Activated CD4-positive, alpha-beta memory T cell treated with anti-CD3 and anti-CD28 coated beads, Interleukin-2, amount 10 ng/mL, durations not matched to agents 7 days and 5 days (primary cell): ENCODE measurements at regions of chr2 and their contacts with region 1.

Region 1: GRCh38 chr2:31170071-31170698 is 31.9 kb upstream of the GALNT14 start:
- DNase-seq: peak; percentile 62
- H3K4me3 Mint-ChIP-seq: no peak overlapping the region
- H3K27ac Mint-ChIP-seq: no peak overlapping the region
- H3K4me1 Mint-ChIP-seq: peaks cover under 1% of the 10 kb centered on the region
- H3K27me3 Mint-ChIP-seq: no peaks in the 10 kb centered on the region

Region 2: DNA sequence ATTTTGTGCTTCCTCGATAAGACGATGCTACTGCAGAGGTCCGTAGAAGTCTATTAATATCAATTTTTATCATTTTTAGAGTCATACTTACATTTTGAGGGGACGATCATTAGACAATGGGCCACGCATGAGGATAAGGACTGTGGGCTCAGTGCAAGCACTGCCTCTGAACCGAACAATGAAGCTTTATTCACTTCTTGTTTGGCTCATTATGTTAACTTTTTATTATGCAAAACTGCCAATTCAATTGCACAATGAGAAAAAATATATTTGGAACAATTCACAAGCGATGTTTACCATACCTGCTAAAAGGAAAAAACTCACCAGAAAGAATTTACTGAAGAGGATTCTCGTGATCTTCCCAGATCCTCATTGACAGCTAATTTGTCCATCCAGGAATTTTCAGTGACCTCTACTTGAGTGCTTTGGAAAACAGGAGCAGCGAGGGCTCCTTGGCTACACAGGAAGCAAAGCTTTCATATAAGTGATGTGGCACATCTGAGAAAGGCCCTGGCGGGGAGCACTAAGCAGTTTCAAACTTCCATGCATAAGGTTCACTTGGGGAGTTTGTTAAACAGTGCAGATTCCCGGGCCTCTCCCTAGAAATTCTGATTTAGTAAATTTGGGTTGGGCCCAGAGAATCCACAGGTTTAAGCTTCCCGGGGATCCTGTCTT is 349.7 kb before region 1 on chr2:
- CTCF ChIA-PET with region 1: no interaction called
- POLR2A ChIA-PET with region 1: no interaction called
- DNase-seq: no peak
- H3K4me3 Mint-ChIP-seq: no peak overlapping the region
- H3K27ac Mint-ChIP-seq: no peak overlapping the region
- H3K4me1 Mint-ChIP-seq: no peaks in the 10 kb centered on the region
- H3K27me3 Mint-ChIP-seq: peaks cover 8% of the 10 kb centered on the region

Region 3: GRCh38 chr2:30862054-30862651 is 308.0 kb before region 1 on chr2:
- CTCF ChIA-PET with region 1: interaction called, 22 read pairs
- POLR2A ChIA-PET with region 1: no interaction called
- DNase-seq: peak; percentile 42
- H3K4me3 Mint-ChIP-seq: no peak overlapping the region
- H3K27ac Mint-ChIP-seq: no peak overlapping the region
- H3K4me1 Mint-ChIP-seq: peaks cover 18% of the 10 kb centered on the region
- H3K27me3 Mint-ChIP-seq: peaks cover 8% of the 10 kb centered on the region

Region 4: GRCh38 chr2:31151501-31151900 is 18.7 kb before region 1 on chr2:
- CTCF ChIA-PET with region 1: interaction called, 13 read pairs
- POLR2A ChIA-PET with region 1: no interaction called
- DNase-seq: no peak
- H3K4me3 Mint-ChIP-seq: no peak overlapping the region
- H3K27ac Mint-ChIP-seq: no peak overlapping the region
- H3K4me1 Mint-ChIP-seq: no peaks in the 10 kb centered on the region
- H3K27me3 Mint-ChIP-seq: peaks cover 22% of the 10 kb centered on the region

Region 5: DNA sequence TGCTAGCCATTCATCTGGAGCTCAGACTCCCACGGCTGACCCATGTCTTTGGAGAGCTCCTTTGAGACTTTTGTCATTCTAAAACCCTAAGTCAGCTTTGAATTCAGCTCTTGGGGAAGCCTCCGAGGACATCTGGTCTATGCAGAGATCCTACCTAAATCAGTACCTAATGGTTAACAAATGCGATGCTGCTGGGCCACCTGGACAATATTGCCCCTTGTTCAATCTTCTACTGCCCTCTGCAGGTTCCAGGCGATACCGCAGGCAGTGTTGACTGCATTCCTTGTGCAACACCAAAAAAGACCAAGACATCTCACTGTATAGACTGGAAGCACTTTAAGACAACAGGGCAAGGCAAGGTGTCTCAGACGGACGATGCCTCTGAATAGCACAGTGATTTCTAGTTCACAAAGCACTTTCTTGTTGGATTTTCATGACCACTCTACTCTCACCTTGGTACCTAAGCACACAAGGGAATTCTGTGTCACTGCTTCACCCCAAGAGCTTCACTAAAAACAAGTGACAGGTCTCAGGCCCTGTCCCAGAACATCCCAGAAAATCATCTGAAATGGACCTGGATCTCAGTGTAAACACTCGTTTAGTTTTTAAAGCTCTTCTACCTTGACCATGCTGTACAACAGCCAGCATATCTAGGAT is 163.5 kb after region 1 on chr2:
- CTCF ChIA-PET with region 1: interaction called, 13 read pairs
- POLR2A ChIA-PET with region 1: interaction called, 3 read pairs
- DNase-seq: peak; percentile 83
- H3K4me3 Mint-ChIP-seq: no peak overlapping the region
- H3K27ac Mint-ChIP-seq: no peak overlapping the region
- H3K4me1 Mint-ChIP-seq: no peaks in the 10 kb centered on the region
- H3K27me3 Mint-ChIP-seq: peaks cover 21% of the 10 kb centered on the region